ENCODE measurements at regions of chr16 and their contacts with region 1.

Region 1: DNA sequence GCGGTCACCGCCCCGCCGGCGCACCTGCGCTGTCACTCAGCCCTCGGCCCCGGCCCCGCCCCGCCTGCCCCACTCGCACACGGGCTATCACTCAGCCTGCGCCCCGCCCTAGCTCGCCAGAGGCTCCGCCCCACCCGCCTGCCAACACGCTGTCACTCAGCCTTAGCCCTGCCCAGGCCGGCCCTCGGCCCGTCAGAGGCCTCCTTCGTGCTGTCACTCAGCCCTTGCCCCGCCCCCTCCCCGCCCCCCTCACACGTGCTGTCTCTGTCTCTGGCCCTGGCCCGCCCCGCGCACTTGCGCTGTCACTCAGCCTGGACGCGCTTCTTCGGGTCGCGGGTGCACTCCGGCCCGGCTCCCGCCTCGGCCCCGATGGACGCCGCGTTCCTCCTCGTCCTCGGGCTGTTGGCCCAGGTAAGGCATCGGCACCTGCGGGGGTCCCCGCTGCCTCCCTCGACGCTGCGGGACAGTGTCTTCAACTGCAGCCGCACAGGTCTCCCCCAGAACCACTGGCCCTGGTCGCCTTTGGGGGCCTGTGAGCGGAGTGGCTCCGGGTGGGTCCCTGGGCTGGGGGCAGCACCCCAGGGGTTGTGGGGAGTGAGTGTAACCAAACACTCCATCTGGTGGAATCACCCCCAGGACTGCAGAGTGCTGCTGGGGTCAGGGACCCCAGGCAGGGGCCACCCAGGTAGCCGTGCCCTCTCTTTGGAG is at the start of gene CDH15:
- DNase-seq: peak; percentile 97
- H3K4me3 ChIP-seq: peak within 1 kb of the TSS; percentile 34 to 53 (median 41)
- H3K27ac ChIP-seq: no peak within 1 kb of the TSS
- H3K4me1 ChIP-seq: peaks cover 19 to 33% (median 28%) of the 10 kb centered on the region in 4 donors
- H3K27me3 ChIP-seq: peaks cover 13 to 94% (median 50%) of the 10 kb centered on the region in 4 donors
- CTCF ChIP-seq: no peak
- EP300 ChIP-seq: no peak
- POLR2A ChIP-seq: peak; percentile 49
- total RNA-seq, gene CDH15: under 0.01 to 0.17 (median 0.13) TPM in 3 of 4 donors, not detected in the other

Region 2: DNA sequence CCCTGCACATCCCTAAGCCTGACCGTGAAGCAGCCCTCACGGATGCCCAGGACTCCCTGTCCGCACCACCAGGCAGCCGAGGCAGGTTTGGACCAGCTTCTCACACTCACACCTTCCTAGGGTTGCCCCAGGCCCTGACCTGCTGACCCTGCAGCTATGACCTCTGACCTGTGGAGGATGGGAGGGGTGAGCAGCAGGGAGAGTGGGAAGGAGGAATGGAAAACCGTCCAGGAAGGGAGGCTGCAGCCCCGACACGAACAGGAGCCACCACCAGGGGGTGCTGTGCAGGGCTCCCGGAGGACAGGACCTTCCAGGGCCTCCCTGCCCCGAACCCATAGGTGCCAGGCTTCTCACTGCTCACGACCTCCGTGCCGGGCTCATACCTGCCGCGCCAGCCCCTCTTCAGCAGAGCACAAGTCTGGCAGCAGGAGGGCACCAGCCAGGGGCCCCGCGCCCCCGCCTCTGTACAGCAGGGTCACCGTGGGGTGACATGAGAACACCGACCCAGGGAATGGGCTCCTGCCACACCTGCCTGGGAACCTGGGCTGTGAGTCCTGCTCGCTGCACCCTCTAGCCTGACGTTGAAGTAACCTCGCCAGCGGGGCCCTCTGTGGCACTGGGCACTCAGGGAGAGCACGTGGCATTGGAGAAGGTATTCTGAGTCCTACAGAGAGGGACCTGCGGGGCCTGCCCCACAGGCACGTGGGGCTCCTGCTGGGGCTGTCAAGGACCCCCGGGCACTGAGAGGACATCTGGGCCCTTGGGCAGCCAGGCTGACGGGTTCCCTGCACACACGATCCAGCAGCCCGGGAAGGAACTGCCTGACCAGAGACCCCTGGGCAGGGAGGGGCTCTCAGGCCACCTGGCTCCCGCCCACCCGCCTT is 427.7 kb before region 1 on chr16:
- intact Hi-C with region 1: loop called (anchors 10 kb)
- DNase-seq: no peak
- H3K4me3 ChIP-seq: no peak overlapping the region
- H3K27ac ChIP-seq: peak overlapping the region in 3 of 4 donors; percentile 18 to 84 (median 53)
- H3K4me1 ChIP-seq: peaks cover 37 to 56% (median 53%) of the 10 kb centered on the region in 4 donors
- H3K27me3 ChIP-seq: no peaks in the 10 kb centered on the region
- CTCF ChIP-seq: peak in 2 of 3 experiments; percentile 88
- EP300 ChIP-seq: no peak
- POLR2A ChIP-seq: no peak

Region 3: DNA sequence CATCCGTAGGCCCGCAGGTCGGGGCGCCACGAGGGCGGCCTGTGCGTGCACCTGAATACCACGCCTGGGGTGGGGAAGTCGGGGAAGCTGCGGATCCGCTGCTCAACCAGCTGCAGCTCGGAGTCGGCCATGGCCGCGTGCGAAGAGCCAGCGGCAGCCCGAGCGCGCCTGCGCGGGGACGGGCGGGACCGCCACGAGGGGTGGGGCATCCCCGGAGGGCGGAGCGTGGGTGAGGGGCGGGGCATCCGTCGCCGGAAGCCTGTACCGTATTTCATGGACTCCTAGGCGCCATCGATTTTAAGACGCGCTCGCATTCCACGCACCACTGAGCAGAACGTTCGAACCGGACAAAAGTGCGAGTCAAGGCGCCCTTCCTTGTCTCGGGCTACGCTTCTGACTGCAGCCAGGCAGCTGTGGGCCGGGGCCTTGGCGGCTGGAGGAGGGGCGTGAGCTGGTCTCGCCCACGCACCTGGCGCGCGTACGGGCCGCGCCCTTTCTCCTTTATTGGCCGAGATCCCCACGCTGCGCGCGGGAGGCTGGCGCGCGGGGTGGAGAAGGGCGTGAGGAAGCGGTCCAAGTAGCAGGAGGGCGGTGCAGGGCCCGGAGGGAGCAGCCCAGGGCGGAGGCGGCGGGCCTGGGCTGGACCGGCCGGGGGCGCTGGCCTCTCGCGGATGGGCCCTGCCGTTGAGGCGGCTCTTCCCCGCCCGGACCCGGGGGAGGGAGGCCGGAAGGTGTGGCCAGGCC is 359.7 kb before region 1 on chr16 and contains the start of gene APRT:
- intact Hi-C with region 1: loop called (anchors 10 kb)
- DNase-seq: peak; percentile 99
- H3K4me3 ChIP-seq: peak within 1 kb of the TSS; percentile 77 to 90 (median 81)
- H3K27ac ChIP-seq: peak within 1 kb of the TSS; percentile 86 to 97 (median 92)
- H3K4me1 ChIP-seq: peaks cover 26 to 45% (median 40%) of the 10 kb centered on the region in 4 donors
- H3K27me3 ChIP-seq: no peaks in the 10 kb centered on the region
- CTCF ChIP-seq: peak; percentile 20 to 44 (median 28)
- EP300 ChIP-seq: no peak
- POLR2A ChIP-seq: peak; percentile 33
- total RNA-seq, gene APRT: 60.6 to 141 (median 98.6) TPM

Region 4: DNA sequence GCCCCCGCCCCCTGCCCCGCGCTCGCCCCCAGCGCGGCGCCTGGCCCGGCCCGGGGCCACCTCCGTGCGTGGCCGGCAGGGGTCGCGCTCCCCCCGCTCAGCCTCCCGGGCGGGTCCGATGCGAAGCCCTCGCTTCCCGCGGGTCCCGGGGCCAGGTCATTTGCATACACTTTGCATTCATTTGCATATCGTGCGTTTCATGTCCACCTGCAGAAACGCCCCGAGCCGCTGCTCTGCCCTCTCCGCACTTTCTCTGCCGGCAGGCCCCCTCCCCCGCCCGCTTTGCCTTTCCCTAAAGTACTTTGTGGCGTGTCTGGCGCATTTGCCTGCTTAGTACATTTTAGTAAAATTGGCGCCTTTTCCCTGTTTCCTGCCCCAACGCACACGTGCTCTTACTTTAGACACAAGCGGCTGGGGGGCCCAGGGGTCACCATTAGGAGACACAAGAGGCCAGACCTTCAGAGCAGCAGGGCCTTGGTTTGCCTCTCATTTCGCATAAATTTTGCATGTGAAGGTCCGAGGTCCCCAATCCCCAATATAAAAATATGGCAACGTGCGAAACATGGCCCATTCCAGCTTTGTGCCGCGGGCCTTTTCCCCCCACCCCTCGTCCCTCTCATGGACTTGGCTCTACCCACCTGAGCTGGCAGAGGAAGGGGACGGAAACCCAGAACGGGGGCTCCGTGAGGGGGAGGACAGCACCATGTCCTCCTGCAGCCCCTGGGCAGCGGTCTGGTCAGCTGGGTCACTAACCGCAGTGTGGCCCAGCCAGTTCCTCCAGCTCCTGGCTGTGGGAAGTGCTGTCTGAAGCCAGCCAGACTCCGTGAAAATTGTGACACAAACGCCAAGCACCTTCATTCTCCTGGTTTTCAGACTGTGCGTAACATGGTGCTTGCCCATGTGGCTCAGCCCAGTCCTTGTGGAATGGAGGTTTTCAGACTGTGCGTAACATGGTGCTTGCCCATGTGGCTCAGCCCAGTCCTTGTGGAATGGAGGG is 229.4 kb before region 1 on chr16:
- intact Hi-C with region 1: loop called (anchors 10 kb)
- DNase-seq: no peak
- H3K4me3 ChIP-seq: peak overlapping the region; percentile 55 to 61 (median 58)
- H3K27ac ChIP-seq: no peak overlapping the region
- H3K4me1 ChIP-seq: peaks cover 21 to 49% (median 48%) of the 10 kb centered on the region in 4 donors
- H3K27me3 ChIP-seq: peaks cover 0 to 88% (median 17%) of the 10 kb centered on the region in 4 donors
- CTCF ChIP-seq: peak; percentile 65 to 81 (median 65)
- EP300 ChIP-seq: no peak
- POLR2A ChIP-seq: no peak

Region 5: GRCh38 chr16:89009311-89010209 is 162.1 kb before region 1 on chr16:
- intact Hi-C with region 1: no loop called
- DNase-seq: no peak
- H3K4me3 ChIP-seq: no peak overlapping the region
- H3K27ac ChIP-seq: no peak overlapping the region
- H3K4me1 ChIP-seq: peaks cover 0 to under 1% (median 0%) of the 10 kb centered on the region in 4 donors
- H3K27me3 ChIP-seq: peaks cover 0 to 84% (median 0%) of the 10 kb centered on the region in 4 donors
- CTCF ChIP-seq: no peak
- EP300 ChIP-seq: no peak
- POLR2A ChIP-seq: no peak